T-cell (primary cell): ENCODE measurements at regions of chr7 and their contacts with region 1.

Region 1: GRCh38 chr7:138021889-138022288 is 20.0 kb upstream of the CREB3L2 start:
- DNase-seq: no peak
- ATAC-seq: no peak
- H3K4me3 ChIP-seq: no peak overlapping the region
- H3K4me3 Mint-ChIP-seq: no peak overlapping the region
- H3K27ac ChIP-seq: no peak overlapping the region
- H3K27ac Mint-ChIP-seq: no peak overlapping the region
- H3K4me1 ChIP-seq: no peaks in the 10 kb centered on the region
- H3K4me1 Mint-ChIP-seq: peaks cover 3 to 6% (median 4%) of the 10 kb centered on the region in 3 donors
- H3K27me3 ChIP-seq: peaks cover 0 to 6% of the 10 kb centered on the region in 2 experiments
- H3K27me3 Mint-ChIP-seq: no peaks in the 10 kb centered on the region

Region 2: GRCh38 chr7:137886281-137886680 is 135.6 kb before region 1 on chr7:
- CTCF ChIA-PET with region 1: interaction called in 1 of 2 experiments, 3 read pairs
- POLR2A ChIA-PET with region 1: interaction called in 1 of 2 experiments, 16 read pairs
- DNase-seq: no peak
- ATAC-seq: no peak
- H3K4me3 ChIP-seq: no peak overlapping the region
- H3K4me3 Mint-ChIP-seq: no peak overlapping the region
- H3K27ac ChIP-seq: no peak overlapping the region
- H3K27ac Mint-ChIP-seq: peak overlapping the region in 1 of 2 donors; percentile 25
- H3K4me1 ChIP-seq: no peaks in the 10 kb centered on the region
- H3K4me1 Mint-ChIP-seq: no peaks in the 10 kb centered on the region
- H3K27me3 ChIP-seq: no peaks in the 10 kb centered on the region
- H3K27me3 Mint-ChIP-seq: no peaks in the 10 kb centered on the region

Region 3: DNA sequence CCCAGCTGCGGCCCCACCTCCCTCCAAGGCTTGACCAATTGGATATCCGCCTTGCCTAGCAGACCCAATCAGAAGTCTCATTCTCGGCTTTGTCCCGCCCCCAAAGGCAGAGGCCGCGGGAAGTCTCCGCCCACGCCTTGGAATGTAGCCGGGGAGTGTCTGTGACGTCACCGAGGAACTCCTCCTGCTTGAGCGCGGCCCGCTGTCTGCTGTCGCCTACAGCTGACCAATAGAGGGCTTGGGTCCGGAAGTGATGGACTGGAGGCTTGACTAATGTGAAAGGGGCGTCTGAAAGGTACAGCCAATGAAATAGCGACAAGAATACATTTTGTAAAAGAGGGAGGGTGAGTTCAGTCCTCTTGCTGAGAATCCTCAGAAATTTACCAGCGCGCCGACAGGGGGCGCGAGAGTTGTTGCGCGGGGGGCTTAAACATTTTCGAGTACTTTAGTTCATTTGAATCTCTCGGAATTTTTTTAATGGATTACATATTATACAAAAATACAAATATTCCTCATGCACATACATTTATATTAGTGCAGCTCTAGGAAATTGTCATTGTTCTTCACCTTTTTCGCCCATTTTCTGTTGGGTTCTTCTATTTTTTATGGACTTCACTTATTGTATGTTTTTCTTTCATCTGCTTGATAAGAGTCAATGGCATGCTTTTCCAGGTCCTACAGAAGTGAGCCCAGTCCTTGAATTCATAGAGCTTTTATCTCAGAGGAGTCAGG is 19.6 kb before region 1 on chr7:
- CTCF ChIA-PET with region 1: interaction called, 3 to 12 read pairs
- POLR2A ChIA-PET with region 1: interaction called in 1 of 2 experiments, 4 read pairs
- DNase-seq: peak; percentile 92 to 99 (median 96)
- ATAC-seq: peak; percentile 87 to 93 (median 90)
- H3K4me3 ChIP-seq: peak overlapping the region; percentile 93 to 95
- H3K4me3 Mint-ChIP-seq: peak overlapping the region; percentile 94 to 97 (median 95)
- H3K27ac ChIP-seq: peak overlapping the region; percentile 77
- H3K27ac Mint-ChIP-seq: peak overlapping the region; percentile 87 to 90
- H3K4me1 ChIP-seq: peaks cover 5 to 17% of the 10 kb centered on the region in 2 experiments
- H3K4me1 Mint-ChIP-seq: peaks cover 34 to 45% (median 35%) of the 10 kb centered on the region in 3 donors
- H3K27me3 ChIP-seq: no peaks in the 10 kb centered on the region
- H3K27me3 Mint-ChIP-seq: no peaks in the 10 kb centered on the region

Region 4: DNA sequence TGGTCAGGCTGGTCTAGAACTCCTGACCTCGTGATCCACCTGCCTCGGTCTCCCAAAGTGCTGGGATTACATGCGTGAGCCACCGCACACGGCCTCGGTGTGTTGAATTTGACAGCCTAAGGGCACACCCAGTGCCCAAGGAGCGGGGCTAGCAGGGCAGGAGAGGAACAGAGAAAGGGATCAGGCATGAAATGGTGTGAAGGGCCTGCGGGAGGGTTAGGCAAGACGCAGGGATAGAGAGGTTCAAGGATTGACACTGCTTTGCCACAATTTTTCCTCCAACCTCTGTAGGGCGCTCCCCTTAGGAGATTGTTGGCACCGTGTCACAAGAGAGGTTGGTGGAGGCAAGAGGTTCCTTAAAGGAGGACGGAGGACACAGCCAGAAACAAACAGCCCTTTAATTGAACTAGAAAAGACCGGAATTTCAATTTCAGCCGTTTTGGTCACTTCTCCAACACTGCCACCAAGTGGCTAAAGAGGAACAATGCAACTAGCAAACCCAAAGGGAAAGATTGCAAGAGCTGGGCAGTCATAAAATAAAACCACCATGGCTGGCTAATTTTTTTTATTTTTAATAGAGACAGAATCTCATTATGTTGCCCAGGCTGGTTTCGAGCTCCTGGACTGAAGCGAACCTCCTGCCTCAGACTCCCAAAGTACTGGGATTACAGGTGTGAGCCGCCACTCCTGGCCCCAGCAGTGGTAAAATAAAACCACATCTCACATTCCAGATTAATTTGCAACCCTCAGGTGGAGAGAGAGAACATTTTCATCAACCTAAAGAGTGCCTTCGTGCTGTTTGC is 13.1 kb before region 1 on chr7:
- CTCF ChIA-PET with region 1: interaction called, 3 to 12 read pairs
- POLR2A ChIA-PET with region 1: no interaction called
- DNase-seq: peak in 20 of 35 experiments; percentile 6 to 73 (median 18)
- ATAC-seq: peak in 3 of 4 experiments; percentile 30 to 60 (median 36)
- H3K4me3 ChIP-seq: no peak overlapping the region
- H3K4me3 Mint-ChIP-seq: no peak overlapping the region
- H3K27ac ChIP-seq: no peak overlapping the region
- H3K27ac Mint-ChIP-seq: no peak overlapping the region
- H3K4me1 ChIP-seq: peaks cover 0 to 3% of the 10 kb centered on the region in 2 experiments
- H3K4me1 Mint-ChIP-seq: peaks cover 5 to 15% (median 7%) of the 10 kb centered on the region in 3 donors
- H3K27me3 ChIP-seq: peaks cover 0 to 2% of the 10 kb centered on the region in 2 experiments
- H3K27me3 Mint-ChIP-seq: peaks cover 4 to 6% of the 10 kb centered on the region in 2 donors

Region 5: GRCh38 chr7:139109188-139109982 is 1087.5 kb after region 1 on chr7 and contains the start of gene ZC3HAV1:
- CTCF ChIA-PET with region 1: interaction called in 1 of 2 experiments, 14 read pairs
- POLR2A ChIA-PET with region 1: no interaction called
- DNase-seq: peak; percentile 66 to 95 (median 89)
- ATAC-seq: peak; percentile 85 to 89 (median 86)
- H3K4me3 ChIP-seq: peak within 1 kb of the TSS; percentile 88 to 100
- H3K4me3 Mint-ChIP-seq: peak within 1 kb of the TSS; percentile 98 to 99 (median 98)
- H3K27ac ChIP-seq: peak within 1 kb of the TSS; percentile 93
- H3K27ac Mint-ChIP-seq: peak within 1 kb of the TSS; percentile 98
- H3K4me1 ChIP-seq: peaks cover 4 to 18% of the 10 kb centered on the region in 2 experiments
- H3K4me1 Mint-ChIP-seq: peaks cover 36 to 46% (median 45%) of the 10 kb centered on the region in 3 donors
- H3K27me3 ChIP-seq: no peaks in the 10 kb centered on the region
- H3K27me3 Mint-ChIP-seq: no peaks in the 10 kb centered on the region
- total RNA-seq, gene ZC3HAV1: 148 to 201 (median 155) TPM